Astrocyte of the cerebellum (primary cell): ENCODE measurements at regions of chr14 and their contacts with region 1.

Region 1: GRCh38 chr14:102795060-102795925 is 18.0 kb downstream of the TRAF3 start:
- DNase-seq: no peak
- H3K4me3 ChIP-seq: no peak overlapping the region
- CTCF ChIP-seq: peak; percentile 24

Region 2: GRCh38 chr14:102738756-102739494 is 56.4 kb before region 1 on chr14:
- in situ Hi-C with region 1: no loop called
- DNase-seq: no peak
- H3K4me3 ChIP-seq: no peak overlapping the region
- CTCF ChIP-seq: no peak

Region 3: GRCh38 chr14:102849526-102850379 is 54.5 kb after region 1 on chr14:
- in situ Hi-C with region 1: loop called (anchors 5 kb)
- DNase-seq: no peak
- H3K4me3 ChIP-seq: no peak overlapping the region
- CTCF ChIP-seq: no peak